ENCODE measurements at regions of chr10 and their contacts with region 1.

Region 1: DNA sequence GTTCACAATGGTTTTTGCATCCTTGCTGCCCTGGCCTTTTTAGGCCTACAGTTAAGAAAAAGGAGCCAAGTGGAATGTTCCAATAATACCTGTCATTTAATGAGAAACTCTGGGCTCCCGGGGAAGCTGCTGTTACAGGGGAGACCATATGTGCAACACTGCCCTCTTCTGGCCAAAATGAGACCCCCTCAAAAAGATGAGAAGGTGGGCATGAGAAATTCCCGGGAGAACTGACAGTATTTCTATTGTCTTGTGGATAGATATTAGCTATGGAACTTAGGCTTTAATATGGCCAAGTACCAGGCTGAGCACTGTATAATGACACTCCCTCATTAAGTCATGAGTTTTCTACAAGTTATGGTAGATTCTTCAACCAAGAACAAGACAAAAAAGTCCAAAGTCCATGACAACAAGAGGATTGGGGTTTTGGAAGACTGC is 99.4 kb downstream of the CCDC3 start:
- H3K4me3 ChIP-seq: no peak overlapping the region
- H3K27ac ChIP-seq: no peak overlapping the region
- H3K4me1 ChIP-seq: no peaks in the 10 kb centered on the region
- CTCF ChIP-seq: peak; percentile 39; the same call in 1 of the 2 replicates

Region 2: DNA sequence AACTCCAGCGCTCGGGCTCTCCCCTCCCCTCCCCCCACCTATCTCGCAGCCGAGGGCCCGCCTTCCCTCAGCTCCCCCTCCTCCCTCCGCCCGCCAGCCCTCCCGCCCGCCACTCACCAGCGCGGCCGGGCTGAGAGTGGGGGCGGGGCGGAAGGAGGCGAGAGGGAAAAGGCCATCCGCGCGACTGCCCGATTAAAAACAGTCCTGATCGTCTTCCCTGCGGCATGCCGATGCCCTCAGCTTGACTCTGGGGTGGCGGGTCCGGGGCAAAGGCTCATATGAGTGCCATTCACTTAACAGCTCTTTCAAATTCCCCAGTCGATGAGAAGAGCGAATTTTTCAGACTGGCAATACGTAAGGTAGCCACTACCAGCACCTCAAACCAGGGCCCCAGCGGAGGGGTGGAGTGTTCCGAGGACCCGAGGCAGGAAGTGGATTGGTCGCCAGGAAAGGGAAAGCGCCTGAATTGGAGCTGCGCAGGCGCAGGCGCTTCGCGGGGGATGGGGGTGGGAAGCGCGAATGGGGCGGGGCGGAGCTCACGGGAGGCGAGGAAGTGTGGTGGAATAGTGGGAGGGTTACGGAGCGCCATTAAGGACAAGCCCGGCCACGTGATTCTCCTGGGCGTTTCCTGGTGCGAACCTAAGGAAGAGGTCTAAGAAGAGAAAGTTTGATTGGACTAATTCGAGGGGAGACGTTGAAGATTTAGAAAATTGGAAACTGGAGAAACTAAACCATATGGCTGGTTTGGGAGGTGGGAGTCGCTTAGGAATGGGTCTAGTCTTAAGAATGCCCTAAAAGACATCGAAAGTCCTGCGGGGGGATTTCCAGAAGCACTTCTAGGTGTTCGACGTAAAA is 859.1 kb before region 1 on chr10 and contains the start of gene UPF2:
- CTCF ChIA-PET with region 1: no interaction called
- POLR2A ChIA-PET with region 1: no interaction called
- H3K4me3 ChIP-seq: peak within 1 kb of the TSS; percentile 87
- H3K27ac ChIP-seq: peak within 1 kb of the TSS; percentile 100
- H3K4me1 ChIP-seq: peaks cover 10% of the 10 kb centered on the region
- CTCF ChIP-seq: no peak

Region 3: DNA sequence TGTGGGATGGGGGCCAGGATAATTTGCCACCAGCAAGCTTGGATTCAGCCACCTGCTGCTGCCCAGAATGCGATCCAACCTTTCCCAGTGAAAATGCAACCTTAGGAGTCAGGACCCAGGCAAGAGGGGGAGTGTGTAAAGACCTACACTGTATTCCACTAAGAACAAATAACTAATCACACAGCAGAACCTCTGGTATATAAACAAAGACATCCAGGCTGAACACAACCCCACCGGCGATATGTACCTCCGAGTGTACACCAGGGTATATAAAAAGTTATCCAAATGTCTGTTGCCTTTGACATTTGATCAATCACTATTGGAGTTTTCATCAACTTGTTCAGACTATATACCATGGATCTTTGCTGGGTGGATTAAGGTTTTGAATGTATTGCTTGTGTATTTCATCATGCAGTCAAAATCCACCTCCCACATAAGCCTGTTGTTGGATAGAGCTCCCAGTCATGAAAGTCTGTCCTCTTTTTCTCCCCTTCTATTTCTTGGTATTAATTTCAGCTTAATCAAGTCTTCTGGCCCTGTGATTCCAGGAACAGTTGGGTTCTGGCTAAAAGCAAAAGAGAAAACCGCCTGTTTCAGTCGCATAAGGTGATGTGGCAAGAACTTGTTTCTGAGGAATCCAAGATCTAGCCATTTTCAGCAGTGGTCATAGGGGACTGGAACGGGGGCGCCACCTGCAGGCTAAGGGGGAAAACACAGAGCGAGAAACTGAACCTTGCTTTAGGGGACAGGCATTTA is 191.4 kb before region 1 on chr10:
- CTCF ChIA-PET with region 1: interaction called, 19 read pairs
- POLR2A ChIA-PET with region 1: no interaction called
- H3K4me3 ChIP-seq: no peak overlapping the region
- H3K27ac ChIP-seq: peak overlapping the region; percentile 50
- H3K4me1 ChIP-seq: peaks cover 22% of the 10 kb centered on the region
- CTCF ChIP-seq: peak; percentile 72

Region 4: GRCh38 chr10:12890958-12891357 is 11.2 kb before region 1 on chr10:
- CTCF ChIA-PET with region 1: interaction called, 13 read pairs
- POLR2A ChIA-PET with region 1: no interaction called
- H3K4me3 ChIP-seq: no peak overlapping the region
- H3K27ac ChIP-seq: no peak overlapping the region
- H3K4me1 ChIP-seq: no peaks in the 10 kb centered on the region
- CTCF ChIP-seq: no peak

Measured in HEK293 (cell line).